Psoas muscle (tissue), 8 donors: ENCODE measurements at regions of chr7 and their contacts with region 1.

Region 1: DNA sequence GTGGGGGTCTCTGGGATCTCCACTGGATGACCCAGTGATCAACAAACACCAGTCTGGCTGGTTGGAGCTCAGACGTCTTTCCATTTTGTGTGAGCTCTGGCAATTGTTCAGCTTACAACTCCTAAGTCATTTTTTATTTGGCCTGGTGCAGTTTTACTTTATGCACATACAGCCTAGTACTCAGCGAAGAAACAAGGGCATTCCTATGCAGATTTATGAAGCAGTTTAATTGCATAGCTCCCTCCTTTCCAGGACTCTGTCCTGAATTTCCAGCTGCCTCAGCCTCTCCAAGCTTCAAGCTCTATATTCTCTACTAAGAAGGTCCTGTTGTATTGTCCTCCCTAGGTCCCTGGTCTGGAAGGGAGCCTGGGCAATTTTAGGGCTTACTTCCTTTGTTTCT is 145.6 kb upstream of the GALNT17 start:
- DNase-seq: no peak
- ATAC-seq: no peak
- H3K4me3 ChIP-seq: no peak overlapping the region
- H3K27ac ChIP-seq: no peak overlapping the region
- H3K4me1 ChIP-seq: no peaks in the 10 kb centered on the region
- H3K27me3 ChIP-seq: no peaks in the 10 kb centered on the region
- CTCF ChIP-seq: no peak

Region 2: GRCh38 chr7:70944516-70944915 is 41.8 kb before region 1 on chr7:
- intact Hi-C with region 1: loop called in 1 of 2 experiments (anchors 1 kb)
- DNase-seq: no peak
- ATAC-seq: no peak
- H3K4me3 ChIP-seq: no peak overlapping the region
- H3K27ac ChIP-seq: no peak overlapping the region
- H3K4me1 ChIP-seq: no peaks in the 10 kb centered on the region
- H3K27me3 ChIP-seq: no peaks in the 10 kb centered on the region
- CTCF ChIP-seq: no peak